Body of pancreas (tissue), 4 donors: ENCODE measurements at regions of chr2 and their contacts with region 1.

Region 1: DNA sequence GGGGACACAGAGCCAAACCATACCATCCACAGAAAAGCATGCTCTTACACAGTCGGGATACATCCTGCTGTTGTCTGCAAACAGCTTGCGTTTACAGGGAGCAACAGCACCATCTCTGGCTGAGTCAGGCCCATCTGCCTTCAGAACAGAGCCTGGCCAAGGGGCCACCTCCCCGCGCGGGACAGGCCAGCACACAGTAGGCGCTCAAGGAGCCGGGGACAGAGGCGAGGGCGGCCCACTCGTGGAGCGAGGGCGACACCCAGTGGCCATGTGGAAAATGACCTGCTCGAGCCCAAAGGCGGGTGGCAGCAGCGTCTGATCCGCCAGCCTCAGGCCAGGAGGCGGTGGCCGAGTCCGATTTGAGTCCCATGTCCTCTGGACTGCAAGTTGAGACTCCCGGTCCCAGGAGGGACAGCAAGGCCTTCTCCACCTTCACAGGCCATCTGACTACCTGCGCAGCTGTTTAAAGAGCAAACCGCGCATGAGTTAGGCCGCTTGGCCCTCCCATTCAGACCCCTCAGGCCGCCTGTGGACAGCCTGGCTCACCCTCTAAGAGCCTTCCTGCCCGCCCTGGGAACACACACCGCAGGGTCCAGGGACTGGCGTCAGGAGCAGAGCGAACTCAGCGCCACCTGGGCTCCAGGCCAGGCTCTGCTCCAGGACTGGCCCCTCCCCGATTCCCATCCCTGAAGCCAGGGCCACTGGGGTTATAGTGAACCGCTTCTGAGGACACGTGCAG is 38.3 kb downstream of the TTC32 start:
- DNase-seq: peak; percentile 65 to 77 (median 68)
- ATAC-seq: peak; percentile 80
- H3K4me3 ChIP-seq: no peak overlapping the region
- H3K27ac ChIP-seq: no peak overlapping the region
- H3K4me1 ChIP-seq: peaks cover 10% of the 10 kb centered on the region
- H3K27me3 ChIP-seq: no peaks in the 10 kb centered on the region
- CTCF ChIP-seq: peak; percentile 88 to 98 (median 92)
- POLR2A ChIP-seq: no peak

Region 2: DNA sequence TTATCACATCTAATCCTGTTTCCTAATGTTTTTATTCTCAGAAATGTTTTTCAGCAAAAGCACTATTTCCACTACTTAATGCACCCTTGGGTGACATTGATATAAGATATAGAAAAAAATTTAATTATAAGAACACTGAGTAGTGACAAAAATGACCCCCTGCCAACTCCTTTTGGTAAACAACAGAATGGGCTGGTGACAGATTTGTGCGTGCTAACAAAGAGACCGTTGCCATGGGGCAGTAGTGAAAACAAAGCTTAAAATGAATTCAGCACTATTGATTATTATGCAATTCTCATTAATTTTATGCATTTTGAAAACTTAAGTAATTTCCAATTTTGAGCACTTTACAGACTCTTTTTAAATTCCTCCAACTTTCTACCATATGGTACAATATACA is 1336.1 kb before region 1 on chr2:
- intact Hi-C with region 1: loop called (anchors 5 kb)
- DNase-seq: no peak
- ATAC-seq: no peak
- H3K4me3 ChIP-seq: no peak overlapping the region
- H3K27ac ChIP-seq: no peak overlapping the region
- H3K4me1 ChIP-seq: no peaks in the 10 kb centered on the region
- H3K27me3 ChIP-seq: no peaks in the 10 kb centered on the region
- CTCF ChIP-seq: no peak
- POLR2A ChIP-seq: no peak

Region 3: GRCh38 chr2:19416784-19417684 is 446.4 kb before region 1 on chr2:
- intact Hi-C with region 1: no loop called
- DNase-seq: no peak
- ATAC-seq: no peak
- H3K4me3 ChIP-seq: no peak overlapping the region
- H3K27ac ChIP-seq: no peak overlapping the region
- H3K4me1 ChIP-seq: no peaks in the 10 kb centered on the region
- H3K27me3 ChIP-seq: no peaks in the 10 kb centered on the region
- CTCF ChIP-seq: no peak
- POLR2A ChIP-seq: no peak